Thyroid gland (tissue), 4 donors: ENCODE measurements at regions of chr19 and their contacts with region 1.

Region 1: GRCh38 chr19:55503502-55504251 is 15.4 kb downstream of the SSC5D start:
- DNase-seq: peak; percentile 93
- H3K4me3 ChIP-seq: peak overlapping the region in 1 of 3 donors; percentile 21
- H3K27ac ChIP-seq: no peak overlapping the region
- H3K4me1 ChIP-seq: no peaks in the 10 kb centered on the region
- H3K27me3 ChIP-seq: no peaks in the 10 kb centered on the region
- CTCF ChIP-seq: peak; percentile 95 to 99 (median 98)
- POLR2A ChIP-seq: no peak

Region 2: GRCh38 chr19:55146078-55146704 is 357.5 kb before region 1 on chr19:
- intact Hi-C with region 1: loop called (anchors 2 kb)
- DNase-seq: no peak
- H3K4me3 ChIP-seq: no peak overlapping the region
- H3K27ac ChIP-seq: no peak overlapping the region
- H3K4me1 ChIP-seq: peaks cover 0 to 7% of the 10 kb centered on the region in 2 donors
- H3K27me3 ChIP-seq: peaks cover 28% of the 10 kb centered on the region
- CTCF ChIP-seq: no peak
- POLR2A ChIP-seq: no peak

Region 3: GRCh38 chr19:55301459-55302317 is 202.0 kb before region 1 on chr19:
- intact Hi-C with region 1: loop called (anchors 10 kb)
- DNase-seq: peak; percentile 79 to 82
- H3K4me3 ChIP-seq: peak overlapping the region in 1 of 3 donors; percentile 10
- H3K27ac ChIP-seq: no peak overlapping the region
- H3K4me1 ChIP-seq: peaks cover 5 to 6% of the 10 kb centered on the region in 2 donors
- H3K27me3 ChIP-seq: no peaks in the 10 kb centered on the region
- CTCF ChIP-seq: peak; percentile 75 to 96 (median 92)
- POLR2A ChIP-seq: no peak

Region 4: GRCh38 chr19:55461974-55462626 is 41.6 kb before region 1 on chr19:
- intact Hi-C with region 1: loop called (anchors 2 kb)
- DNase-seq: no peak
- H3K4me3 ChIP-seq: peak overlapping the region in 2 of 3 donors; percentile 35 to 60
- H3K27ac ChIP-seq: peak overlapping the region; percentile 47 to 63 (median 54)
- H3K4me1 ChIP-seq: peaks cover 0 to 13% of the 10 kb centered on the region in 2 donors
- H3K27me3 ChIP-seq: no peaks in the 10 kb centered on the region
- CTCF ChIP-seq: no peak
- POLR2A ChIP-seq: peak in 1 of 2 donors; percentile 67